Heart right ventricle (tissue), 16 donors: ENCODE measurements at regions of chr15 and their contacts with region 1.

Region 1: GRCh38 chr15:87498560-87498959 is 758.0 kb downstream of the NTRK3 start:
- DNase-seq: no peak
- ATAC-seq: no peak
- H3K4me3 ChIP-seq: no peak overlapping the region
- H3K27ac ChIP-seq: no peak overlapping the region
- H3K4me1 ChIP-seq: peaks cover 0 to 21% (median 9%) of the 10 kb centered on the region in 9 donors
- H3K27me3 ChIP-seq: no peaks in the 10 kb centered on the region
- CTCF ChIP-seq: no peak

Region 2: DNA sequence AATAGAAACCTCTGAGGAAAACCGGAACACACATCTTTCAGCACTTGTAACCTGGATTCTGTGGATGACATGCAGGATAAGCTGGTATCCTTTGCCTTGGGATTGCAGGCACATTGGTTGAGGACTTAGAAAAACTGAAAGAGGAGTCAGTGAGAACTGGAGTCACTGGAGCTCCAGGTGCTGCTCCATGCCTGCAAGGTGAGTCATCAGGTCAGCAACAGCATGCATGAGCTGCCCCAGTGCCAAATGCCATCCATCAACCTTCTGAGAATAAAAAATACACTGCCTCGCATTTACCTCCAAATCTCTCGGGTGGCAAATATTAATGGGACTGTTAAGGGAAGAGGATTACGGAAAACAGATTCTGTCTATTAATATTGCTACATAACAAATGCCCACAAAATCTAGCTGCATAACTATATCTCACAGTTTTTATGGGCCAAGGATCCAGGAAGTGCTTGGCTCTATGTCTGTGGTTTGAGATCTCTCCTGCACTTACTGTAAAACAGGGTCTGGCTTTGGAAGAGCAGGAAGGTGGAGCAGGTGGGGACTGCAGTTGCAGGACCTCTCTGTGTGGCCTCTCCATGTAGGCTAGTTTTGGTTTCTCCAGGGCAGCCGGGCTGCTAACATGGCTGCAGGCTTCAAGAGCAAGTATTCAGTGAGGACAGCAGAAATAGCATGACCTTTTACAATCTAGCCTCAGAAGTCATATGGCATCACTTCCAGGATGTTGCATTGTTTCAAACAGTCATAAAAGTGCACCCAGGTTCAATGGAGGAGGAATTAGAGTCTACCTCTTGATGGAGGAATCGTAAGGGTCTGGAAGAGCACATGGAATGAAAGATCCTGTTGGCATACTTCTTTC is 29.1 kb after region 1 on chr15:
- intact Hi-C with region 1: loop called in 1 of 10 experiments (anchors 2 kb)
- DNase-seq: no peak
- ATAC-seq: peak in 1 of 8 donors; percentile 89
- H3K4me3 ChIP-seq: no peak overlapping the region
- H3K27ac ChIP-seq: no peak overlapping the region
- H3K4me1 ChIP-seq: no peaks in the 10 kb centered on the region
- H3K27me3 ChIP-seq: no peaks in the 10 kb centered on the region
- CTCF ChIP-seq: no peak

Region 3: GRCh38 chr15:87604857-87605446 is 106.4 kb after region 1 on chr15:
- intact Hi-C with region 1: loop called in 1 of 10 experiments (anchors 10 kb)
- DNase-seq: no peak
- ATAC-seq: no peak
- H3K4me3 ChIP-seq: no peak overlapping the region
- H3K27ac ChIP-seq: no peak overlapping the region
- H3K4me1 ChIP-seq: peaks cover 0 to 14% (median 6%) of the 10 kb centered on the region in 9 donors
- H3K27me3 ChIP-seq: no peaks in the 10 kb centered on the region
- CTCF ChIP-seq: peak in 8 of 9 donors; percentile 15 to 59 (median 48)